ENCODE measurements at regions of chr21 and their contacts with region 1.

Region 1: DNA sequence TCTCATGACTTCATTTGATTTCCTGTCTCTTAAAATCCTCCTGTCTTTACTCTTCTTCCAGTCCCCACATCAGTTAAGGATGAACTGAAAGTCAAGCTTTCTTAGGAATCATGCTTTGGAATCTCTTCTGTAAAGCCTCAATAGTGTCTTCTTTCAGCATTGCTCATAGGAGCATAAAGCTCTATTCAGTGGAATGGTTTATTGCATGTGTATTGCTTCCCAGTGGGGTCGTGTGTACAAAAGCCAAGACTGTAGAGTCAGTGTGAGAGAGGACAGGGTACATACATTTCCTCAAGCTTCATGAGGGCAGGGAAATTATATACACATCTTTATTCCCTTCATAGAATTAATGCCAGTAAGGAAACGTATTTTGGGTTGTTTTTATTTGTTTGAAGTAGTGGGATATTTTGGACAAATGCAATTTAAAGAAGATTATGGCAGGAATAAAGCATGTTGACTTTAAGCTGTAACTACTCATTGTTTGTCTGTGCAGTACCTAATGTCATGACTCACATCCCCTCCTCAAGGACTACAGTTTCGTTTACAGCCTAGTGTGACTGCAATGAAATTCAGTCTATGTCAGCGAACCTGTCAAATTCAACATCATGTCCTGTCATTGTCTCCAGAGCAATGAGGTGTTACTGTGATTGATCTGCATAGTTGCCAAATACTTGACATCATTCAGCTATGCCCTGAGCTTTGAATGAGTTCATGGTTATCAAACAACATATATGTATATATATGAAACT is 2164.2 kb downstream of the NCAM2 start:
- DNase-seq: peak; percentile 82
- ATAC-seq: peak; percentile 99
- H3K4me3 ChIP-seq: peak overlapping the region; percentile 7; the same call in 1 of the 2 replicates
- H3K27ac ChIP-seq: peak overlapping the region; percentile 94
- H3K4me1 ChIP-seq: peaks cover 22% of the 10 kb centered on the region
- H3K27me3 ChIP-seq: no peaks in the 10 kb centered on the region
- CTCF ChIP-seq: no peak

Region 2: DNA sequence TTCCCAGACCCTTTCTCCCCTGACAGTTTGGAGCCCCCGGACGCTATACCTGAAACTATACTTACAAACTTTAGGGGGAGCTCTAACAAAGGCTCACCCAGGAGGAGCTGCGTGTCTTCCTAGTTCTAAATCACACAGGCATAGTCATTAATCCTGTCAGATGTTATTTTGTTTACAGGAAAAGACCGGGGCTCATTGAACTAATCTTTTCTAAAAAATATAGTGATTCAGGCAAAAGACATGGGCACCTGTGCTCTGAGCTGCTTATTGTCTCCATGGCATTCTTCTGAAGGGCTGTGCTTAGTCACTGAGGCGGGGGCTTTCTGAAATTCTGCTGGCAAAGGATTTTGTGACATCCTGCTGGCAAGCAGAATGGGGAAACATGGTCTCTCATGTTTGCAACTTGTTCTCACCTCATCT is 587.2 kb before region 1 on chr21:
- CTCF ChIA-PET with region 1: no interaction called
- POLR2A ChIA-PET with region 1: no interaction called
- intact Hi-C with region 1: loop called (anchors 10 kb)
- DNase-seq: peak; percentile 47
- ATAC-seq: peak; percentile 85
- H3K4me3 ChIP-seq: peak overlapping the region; percentile 43
- H3K27ac ChIP-seq: no peak overlapping the region
- H3K4me1 ChIP-seq: no peaks in the 10 kb centered on the region
- H3K27me3 ChIP-seq: no peaks in the 10 kb centered on the region
- CTCF ChIP-seq: peak; percentile 75

Region 3: DNA sequence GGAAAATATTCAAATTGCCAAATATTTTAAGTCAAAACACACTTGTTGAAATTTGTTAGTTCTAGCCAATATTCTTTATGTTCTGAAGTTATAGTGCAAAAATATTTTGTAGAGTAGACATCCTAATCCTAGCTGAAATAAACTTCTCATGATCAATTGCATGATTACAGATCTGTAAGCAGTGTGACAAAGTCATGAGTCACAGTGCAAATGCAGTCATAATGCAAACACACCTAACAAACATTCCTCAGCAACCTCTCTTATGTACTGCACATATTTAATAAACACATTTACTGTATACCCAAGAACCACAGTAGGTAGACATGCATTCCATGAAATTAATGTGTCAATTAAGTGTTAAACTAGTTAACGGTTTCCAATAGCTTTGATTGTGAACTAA is 306.8 kb before region 1 on chr21:
- CTCF ChIA-PET with region 1: no interaction called
- POLR2A ChIA-PET with region 1: no interaction called
- intact Hi-C with region 1: loop called (anchors 10 kb)
- DNase-seq: peak; percentile 92
- ATAC-seq: peak; percentile 100
- H3K4me3 ChIP-seq: no peak overlapping the region
- H3K27ac ChIP-seq: peak overlapping the region; percentile 36
- H3K4me1 ChIP-seq: peaks cover 14% of the 10 kb centered on the region
- H3K27me3 ChIP-seq: no peaks in the 10 kb centered on the region
- CTCF ChIP-seq: no peak

Region 4: DNA sequence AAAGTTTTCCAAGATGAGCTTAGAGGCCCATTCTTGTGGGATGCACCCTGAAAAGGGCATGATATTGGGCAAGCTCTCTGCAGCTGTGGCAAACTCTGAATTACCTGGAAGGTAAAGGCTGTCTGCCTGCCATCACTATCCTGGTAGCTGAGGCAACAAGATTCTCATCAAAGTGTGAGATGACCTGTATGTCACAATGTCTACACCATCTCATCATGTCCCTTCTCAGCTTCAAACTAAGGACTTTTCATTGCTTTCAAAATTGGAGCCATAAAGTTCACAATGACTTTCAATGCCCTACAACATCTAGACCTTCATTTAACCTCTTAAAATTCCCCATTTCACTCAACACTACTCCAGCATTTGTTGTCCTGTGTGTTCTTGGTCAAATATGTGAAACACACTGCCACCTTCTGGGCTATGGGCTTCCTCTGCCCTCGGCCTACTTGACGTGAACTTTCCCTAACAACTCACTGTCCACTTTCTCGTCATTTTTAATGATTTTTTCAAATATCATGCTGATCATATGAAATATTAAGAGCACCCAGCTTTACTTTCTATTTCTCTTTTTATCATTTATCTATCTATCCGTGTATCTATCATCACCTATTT is 145.9 kb before region 1 on chr21:
- CTCF ChIA-PET with region 1: interaction called, 6 read pairs
- POLR2A ChIA-PET with region 1: interaction called, 3 read pairs
- intact Hi-C with region 1: loop called (anchors 1 kb)
- DNase-seq: peak; percentile 62
- ATAC-seq: peak; percentile 69
- H3K4me3 ChIP-seq: no peak overlapping the region
- H3K27ac ChIP-seq: peak overlapping the region; percentile 89
- H3K4me1 ChIP-seq: peaks cover 21% of the 10 kb centered on the region
- H3K27me3 ChIP-seq: no peaks in the 10 kb centered on the region
- CTCF ChIP-seq: peak; percentile 79

Region 5: DNA sequence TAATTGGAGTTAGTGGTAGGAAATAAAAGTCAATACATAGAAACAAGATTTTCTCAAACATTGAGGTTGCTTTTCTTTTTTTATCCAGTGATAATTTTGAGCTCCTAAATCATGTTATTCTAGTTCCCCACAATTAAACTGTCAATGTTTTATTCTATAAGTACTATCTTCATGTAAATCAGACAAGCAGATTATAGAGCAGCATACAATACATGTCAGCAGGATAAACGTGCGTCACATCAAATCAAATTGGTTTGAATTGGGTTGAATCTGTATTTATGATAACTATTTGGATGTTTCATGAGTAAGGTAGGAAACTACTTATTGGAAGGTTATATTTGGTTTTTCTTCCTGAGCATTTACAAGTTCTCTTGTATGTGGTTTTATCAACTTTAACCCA is 135.5 kb before region 1 on chr21:
- CTCF ChIA-PET with region 1: no interaction called
- POLR2A ChIA-PET with region 1: no interaction called
- intact Hi-C with region 1: no loop called
- DNase-seq: no peak
- ATAC-seq: no peak
- H3K4me3 ChIP-seq: no peak overlapping the region
- H3K27ac ChIP-seq: no peak overlapping the region
- H3K4me1 ChIP-seq: no peaks in the 10 kb centered on the region
- H3K27me3 ChIP-seq: no peaks in the 10 kb centered on the region
- CTCF ChIP-seq: no peak

Region 6: GRCh38 chr21:23218667-23219066 is 56.3 kb after region 1 on chr21:
- CTCF ChIA-PET with region 1: no interaction called
- POLR2A ChIA-PET with region 1: no interaction called
- intact Hi-C with region 1: loop called (anchors 1 kb)
- DNase-seq: peak; percentile 60
- ATAC-seq: peak; percentile 77
- H3K4me3 ChIP-seq: no peak overlapping the region
- H3K27ac ChIP-seq: no peak overlapping the region
- H3K4me1 ChIP-seq: peaks cover 10% of the 10 kb centered on the region; the same call in 1 of the 2 replicates
- H3K27me3 ChIP-seq: no peaks in the 10 kb centered on the region
- CTCF ChIP-seq: no peak

Region 7: DNA sequence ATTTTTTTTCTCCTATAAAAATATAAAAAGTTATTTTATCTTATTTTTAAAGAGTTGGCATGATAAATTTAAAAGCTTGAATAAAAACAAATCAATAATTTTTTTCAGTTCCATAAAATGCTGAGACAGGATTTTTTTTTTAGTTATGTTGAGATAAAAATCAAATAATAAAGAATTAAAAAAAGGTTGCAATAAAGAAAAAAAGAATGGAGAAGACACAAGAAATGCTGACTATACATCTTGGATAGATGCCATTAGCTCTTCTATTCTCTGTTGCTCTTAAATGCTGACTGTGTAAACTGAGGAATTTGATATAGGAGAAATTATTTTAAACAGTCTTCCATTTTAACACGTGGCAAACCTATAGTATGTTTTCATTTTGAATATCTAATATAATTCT is 146.4 kb after region 1 on chr21:
- CTCF ChIA-PET with region 1: no interaction called
- POLR2A ChIA-PET with region 1: no interaction called
- intact Hi-C with region 1: no loop called
- DNase-seq: no peak
- ATAC-seq: no peak
- H3K4me3 ChIP-seq: no peak overlapping the region
- H3K27ac ChIP-seq: no peak overlapping the region
- H3K4me1 ChIP-seq: no peaks in the 10 kb centered on the region
- H3K27me3 ChIP-seq: no peaks in the 10 kb centered on the region
- CTCF ChIP-seq: no peak

Region 8: DNA sequence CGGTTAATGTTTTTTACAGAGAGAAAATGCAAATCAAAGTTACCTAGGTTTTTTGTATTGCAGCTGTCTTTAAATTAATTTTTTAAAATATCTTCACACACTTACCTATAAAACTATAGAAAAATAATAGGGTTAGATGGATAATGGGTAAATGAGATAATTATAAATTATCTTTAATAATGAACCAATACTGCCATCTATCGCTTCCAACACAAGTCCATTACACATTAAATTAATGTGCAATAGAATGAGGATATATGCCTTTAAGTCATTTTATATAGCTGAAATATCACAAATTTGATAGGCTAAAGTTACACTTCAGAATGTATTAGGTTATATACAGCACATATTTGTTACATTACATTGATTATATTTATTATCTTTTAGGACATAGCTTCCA is 232.1 kb after region 1 on chr21:
- CTCF ChIA-PET with region 1: no interaction called
- POLR2A ChIA-PET with region 1: interaction called, 4 read pairs
- intact Hi-C with region 1: loop called (anchors 10 kb)
- DNase-seq: peak; percentile 25
- ATAC-seq: peak; percentile 40
- H3K4me3 ChIP-seq: no peak overlapping the region
- H3K27ac ChIP-seq: no peak overlapping the region
- H3K4me1 ChIP-seq: no peaks in the 10 kb centered on the region
- H3K27me3 ChIP-seq: no peaks in the 10 kb centered on the region
- CTCF ChIP-seq: peak; percentile 61

Region 9: GRCh38 chr21:24023402-24023801 is 861.0 kb after region 1 on chr21:
- CTCF ChIA-PET with region 1: no interaction called
- POLR2A ChIA-PET with region 1: no interaction called
- intact Hi-C with region 1: loop called (anchors 10 kb)
- DNase-seq: peak; percentile 81
- ATAC-seq: peak; percentile 98
- H3K4me3 ChIP-seq: peak overlapping the region; percentile 5; the same call in 1 of the 2 replicates
- H3K27ac ChIP-seq: peak overlapping the region; percentile 76
- H3K4me1 ChIP-seq: peaks cover 15% of the 10 kb centered on the region
- H3K27me3 ChIP-seq: no peaks in the 10 kb centered on the region
- CTCF ChIP-seq: no peak